K562 (cell line): ENCODE measurements at regions of chr9 and their contacts with region 1.

Region 1: DNA sequence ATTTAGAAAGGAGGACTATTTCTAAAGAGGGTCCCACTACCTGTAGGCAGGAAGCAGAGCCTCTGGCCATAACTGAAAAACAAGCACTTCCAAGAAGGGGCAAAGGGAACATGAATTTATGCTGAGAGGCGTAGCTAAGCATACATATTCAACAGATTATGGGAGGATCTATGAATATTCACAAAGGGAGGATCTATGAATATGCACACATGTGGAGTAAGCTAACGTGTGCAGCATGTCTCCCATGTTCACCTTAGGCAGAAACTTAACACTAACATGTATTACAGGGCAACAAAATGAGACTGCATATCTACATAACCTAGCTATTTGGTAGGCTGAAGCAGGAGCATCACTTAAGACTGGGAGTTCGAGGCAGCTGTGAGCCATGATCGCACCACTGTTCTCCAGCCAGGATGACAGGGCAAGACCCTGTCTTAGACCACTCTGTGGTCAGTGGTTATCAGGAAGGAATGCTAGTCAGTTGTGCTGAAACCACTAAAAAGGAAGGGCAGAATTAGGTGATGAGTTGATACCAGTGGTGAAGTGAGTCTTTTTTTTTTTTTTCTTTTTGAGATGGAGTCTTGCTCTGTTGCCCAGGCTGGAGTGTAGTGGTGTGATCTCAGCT is 20.8 kb downstream of the FXN start:
- DNase-seq: no peak
- ATAC-seq: no peak
- H3K4me3 ChIP-seq: no peak overlapping the region
- H3K27ac ChIP-seq: no peak overlapping the region; the same call in 2 of the 3 replicates
- H3K4me1 ChIP-seq: no peaks in the 10 kb centered on the region; a peak in 1 of 5 replicates
- H3K27me3 ChIP-seq: no peaks in the 10 kb centered on the region
- CTCF ChIP-seq: no peak
- EP300 ChIP-seq: no peak
- POLR2A ChIP-seq: no peak
- RAD21 ChIP-seq: no peak

Region 2: DNA sequence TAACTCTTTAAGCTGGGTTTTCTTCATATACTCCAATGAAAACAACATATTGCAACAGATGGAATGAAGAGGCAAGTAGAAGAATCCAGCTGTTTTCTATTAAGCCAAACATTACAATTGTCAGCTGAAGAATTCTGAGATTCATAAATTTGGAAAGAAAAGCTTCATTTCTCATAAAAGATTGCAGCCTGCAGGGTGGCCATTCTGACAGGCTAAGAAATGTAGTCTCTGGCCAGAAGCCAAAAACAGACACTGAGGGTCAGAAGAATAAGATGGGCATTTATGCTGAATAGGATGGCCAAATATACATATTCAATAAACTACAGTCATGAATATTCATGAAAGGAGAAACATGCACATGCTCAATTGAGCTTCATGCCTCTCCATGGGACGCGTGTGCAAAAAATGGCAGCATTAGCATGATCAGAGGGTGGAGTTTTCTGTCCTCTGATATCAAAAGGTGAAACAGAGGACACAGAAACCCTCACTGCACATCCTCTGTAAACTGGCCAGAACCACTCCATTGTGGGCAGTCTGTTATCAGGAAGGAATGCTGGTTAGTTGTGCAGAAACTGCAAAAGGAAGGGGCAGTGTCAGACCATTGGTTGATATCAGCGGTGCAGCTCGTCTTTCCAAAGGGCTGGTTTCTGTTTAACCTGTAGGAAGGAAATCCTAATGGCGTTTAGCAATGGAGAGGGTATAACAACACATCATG is 29.4 kb after region 1 on chr9:
- CTCF ChIA-PET with region 1: no interaction called
- POLR2A ChIA-PET with region 1: no interaction called
- in situ Hi-C with region 1: no loop called
- intact Hi-C with region 1: no loop called
- DNase-seq: peak in 1 of 4 experiments; percentile 13
- ATAC-seq: no peak
- H3K4me3 ChIP-seq: no peak overlapping the region
- H3K27ac ChIP-seq: no peak overlapping the region
- H3K4me1 ChIP-seq: no peaks in the 10 kb centered on the region; a peak in 1 of 5 replicates
- H3K27me3 ChIP-seq: no peaks in the 10 kb centered on the region
- CTCF ChIP-seq: no peak
- EP300 ChIP-seq: no peak
- POLR2A ChIP-seq: no peak
- RAD21 ChIP-seq: no peak

Region 3: GRCh38 chr9:69136779-69137178 is 80.5 kb after region 1 on chr9:
- CTCF ChIA-PET with region 1: no interaction called
- POLR2A ChIA-PET with region 1: no interaction called
- in situ Hi-C with region 1: no loop called
- intact Hi-C with region 1: loop called (anchors 5 kb)
- DNase-seq: no peak
- ATAC-seq: no peak
- H3K4me3 ChIP-seq: no peak overlapping the region
- H3K27ac ChIP-seq: no peak overlapping the region
- H3K4me1 ChIP-seq: peaks cover 0 to 3% of the 10 kb centered on the region in 2 experiments; a peak in 3 of 5 replicates
- H3K27me3 ChIP-seq: no peaks in the 10 kb centered on the region
- CTCF ChIP-seq: no peak
- EP300 ChIP-seq: no peak
- POLR2A ChIP-seq: no peak
- RAD21 ChIP-seq: no peak

Region 4: GRCh38 chr9:69193685-69194032 is 137.4 kb after region 1 on chr9:
- CTCF ChIA-PET with region 1: interaction called, 27 read pairs
- POLR2A ChIA-PET with region 1: no interaction called
- in situ Hi-C with region 1: loop called (anchors 5 kb)
- intact Hi-C with region 1: loop called (anchors 1 kb)
- DNase-seq: peak in 2 of 4 experiments; percentile 31 to 44
- ATAC-seq: peak; percentile 75
- H3K4me3 ChIP-seq: no peak overlapping the region
- H3K27ac ChIP-seq: no peak overlapping the region
- H3K4me1 ChIP-seq: peaks cover 4 to 31% of the 10 kb centered on the region in 2 experiments; a peak in 4 of 5 replicates
- H3K27me3 ChIP-seq: no peaks in the 10 kb centered on the region
- CTCF ChIP-seq: peak in 2 of 3 experiments; percentile 34 to 50; a peak in 4 of 6 replicates
- EP300 ChIP-seq: no peak
- POLR2A ChIP-seq: no peak
- RAD21 ChIP-seq: peak; percentile 24 to 68

Region 5: DNA sequence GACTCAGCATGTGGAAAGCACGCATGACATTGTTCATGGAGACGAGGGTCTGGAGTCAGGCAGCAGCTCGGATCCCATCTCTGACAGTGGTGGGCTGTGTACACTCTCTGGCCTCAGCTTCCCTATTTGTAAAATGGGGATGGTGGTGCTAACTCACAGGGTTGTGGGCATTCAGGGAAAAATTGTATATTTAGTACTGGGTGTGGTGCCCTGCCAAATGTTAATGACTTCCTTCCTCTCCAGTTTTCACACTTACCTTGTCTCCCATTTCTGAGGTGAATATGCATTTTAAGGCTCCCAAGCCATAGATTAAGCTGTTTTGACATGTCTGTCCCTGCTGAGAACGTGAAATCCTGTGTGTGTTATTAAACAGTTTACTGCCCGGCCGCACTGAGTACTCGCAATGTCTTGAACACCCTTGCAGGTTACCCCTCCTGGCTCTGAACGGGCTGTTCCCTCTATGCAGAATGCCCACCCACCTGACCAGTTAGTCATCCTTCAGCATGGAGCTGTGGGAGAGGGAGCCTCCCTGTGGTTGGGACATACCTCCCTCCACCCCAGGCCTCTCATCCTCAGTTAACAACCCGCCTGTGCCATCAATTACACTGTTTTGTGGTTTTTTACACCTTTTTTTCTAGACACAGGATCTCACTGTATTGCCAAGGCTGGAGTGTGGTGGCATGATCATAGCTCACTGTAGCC is 143.6 kb after region 1 on chr9:
- CTCF ChIA-PET with region 1: interaction called, 5 read pairs
- POLR2A ChIA-PET with region 1: no interaction called
- in situ Hi-C with region 1: loop called (anchors 5 kb)
- intact Hi-C with region 1: no loop called
- DNase-seq: peak; percentile 47 to 57 (median 54)
- ATAC-seq: peak; percentile 80
- H3K4me3 ChIP-seq: no peak overlapping the region
- H3K27ac ChIP-seq: no peak overlapping the region
- H3K4me1 ChIP-seq: peaks cover 4 to 33% of the 10 kb centered on the region in 2 experiments; a peak in 4 of 5 replicates
- H3K27me3 ChIP-seq: no peaks in the 10 kb centered on the region
- CTCF ChIP-seq: peak in 1 of 3 experiments; percentile 34; a peak in 2 of 6 replicates
- EP300 ChIP-seq: no peak
- POLR2A ChIP-seq: no peak
- RAD21 ChIP-seq: peak in 1 of 2 experiments; percentile 36; a peak in 1 of 4 replicates

Region 6: GRCh38 chr9:69265891-69266290 is 209.6 kb after region 1 on chr9:
- CTCF ChIA-PET with region 1: no interaction called
- POLR2A ChIA-PET with region 1: no interaction called
- in situ Hi-C with region 1: no loop called
- intact Hi-C with region 1: loop called (anchors 10 kb)
- DNase-seq: no peak
- ATAC-seq: no peak
- H3K4me3 ChIP-seq: no peak overlapping the region
- H3K27ac ChIP-seq: no peak overlapping the region
- H3K4me1 ChIP-seq: no peaks in the 10 kb centered on the region; a peak in 1 of 5 replicates
- H3K27me3 ChIP-seq: peaks cover 10 to 21% of the 10 kb centered on the region in 2 experiments
- CTCF ChIP-seq: no peak
- EP300 ChIP-seq: no peak
- POLR2A ChIP-seq: no peak
- RAD21 ChIP-seq: no peak